Activated CD4-positive, alpha-beta T cell treated with anti-CD3 and anti-CD28 coated beads, Interleukin-2, amount 10 ng/mL, durations not matched to agents 24 days and 14 days (primary cell): ENCODE measurements at regions of chr6 and their contacts with region 1.

Region 1: DNA sequence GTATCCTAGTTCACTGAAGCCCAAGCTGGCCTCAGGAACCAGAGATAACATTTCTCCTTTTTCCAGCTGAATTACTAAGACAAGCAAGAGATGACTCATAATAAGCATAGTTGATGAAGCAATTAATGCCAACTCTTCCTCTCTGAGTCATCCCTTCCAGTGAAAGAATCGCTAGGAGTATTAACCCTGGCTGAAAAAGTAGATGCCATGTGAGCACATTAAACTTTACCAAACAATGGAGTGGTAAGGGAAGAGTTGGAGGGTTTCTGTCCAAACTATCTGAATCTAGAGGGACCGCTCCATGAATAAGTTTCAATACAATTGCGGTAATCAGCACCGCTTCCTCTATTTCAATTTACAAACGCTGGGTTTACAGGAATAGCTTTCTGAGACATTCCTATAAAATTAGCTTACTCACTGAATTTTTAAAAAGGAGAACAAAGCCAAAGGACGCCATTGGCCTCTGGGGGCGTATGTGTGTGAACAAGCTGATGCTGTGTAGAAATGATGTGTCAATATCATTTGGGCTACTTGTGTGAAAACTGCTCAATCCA is 48.3 kb downstream of the ATXN1 start:
- DNase-seq: no peak
- H3K4me3 Mint-ChIP-seq: peak overlapping the region; percentile 82
- H3K27ac Mint-ChIP-seq: peak overlapping the region; percentile 92
- H3K4me1 Mint-ChIP-seq: peaks cover 43% of the 10 kb centered on the region
- H3K27me3 Mint-ChIP-seq: no peaks in the 10 kb centered on the region

Region 2: DNA sequence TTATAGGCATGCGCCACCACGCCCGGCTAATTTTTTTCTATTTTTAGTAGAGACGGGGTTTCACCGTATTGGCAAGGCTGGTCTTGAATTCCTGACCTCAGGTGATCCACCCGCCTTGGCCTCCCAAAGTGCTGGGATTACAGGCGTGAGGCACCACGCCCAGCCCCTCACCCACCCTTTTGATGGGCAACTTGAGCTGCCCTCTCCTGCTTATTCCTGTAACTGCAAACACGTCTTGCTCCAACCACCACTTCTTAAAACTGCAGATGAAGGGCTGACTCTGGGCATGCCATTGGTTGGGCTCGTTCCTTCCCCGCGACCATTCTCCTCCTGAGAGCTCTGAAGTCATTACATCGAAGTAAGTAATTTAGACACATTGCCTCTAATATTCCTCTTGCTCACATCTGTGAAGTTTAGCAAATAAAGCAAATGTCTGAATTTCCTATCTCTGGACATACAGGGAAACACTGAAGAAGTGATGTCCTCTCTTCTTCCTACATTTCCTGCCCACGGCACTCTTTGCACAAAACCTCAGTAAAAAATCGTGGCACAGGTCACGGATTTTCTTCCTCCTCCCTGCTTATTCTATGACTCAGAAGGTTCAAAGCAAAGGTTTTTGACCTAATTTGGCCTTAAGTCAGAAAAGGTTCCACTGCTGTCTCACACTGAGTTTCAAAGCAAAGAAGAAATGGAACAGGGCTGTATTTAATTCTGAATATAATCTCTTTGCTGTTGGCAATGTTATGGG is 357.1 kb before region 1 on chr6:
- intact Hi-C with region 1: no loop called
- DNase-seq: no peak
- H3K4me3 Mint-ChIP-seq: no peak overlapping the region
- H3K27ac Mint-ChIP-seq: no peak overlapping the region
- H3K4me1 Mint-ChIP-seq: peaks cover 10% of the 10 kb centered on the region
- H3K27me3 Mint-ChIP-seq: no peaks in the 10 kb centered on the region

Region 3: DNA sequence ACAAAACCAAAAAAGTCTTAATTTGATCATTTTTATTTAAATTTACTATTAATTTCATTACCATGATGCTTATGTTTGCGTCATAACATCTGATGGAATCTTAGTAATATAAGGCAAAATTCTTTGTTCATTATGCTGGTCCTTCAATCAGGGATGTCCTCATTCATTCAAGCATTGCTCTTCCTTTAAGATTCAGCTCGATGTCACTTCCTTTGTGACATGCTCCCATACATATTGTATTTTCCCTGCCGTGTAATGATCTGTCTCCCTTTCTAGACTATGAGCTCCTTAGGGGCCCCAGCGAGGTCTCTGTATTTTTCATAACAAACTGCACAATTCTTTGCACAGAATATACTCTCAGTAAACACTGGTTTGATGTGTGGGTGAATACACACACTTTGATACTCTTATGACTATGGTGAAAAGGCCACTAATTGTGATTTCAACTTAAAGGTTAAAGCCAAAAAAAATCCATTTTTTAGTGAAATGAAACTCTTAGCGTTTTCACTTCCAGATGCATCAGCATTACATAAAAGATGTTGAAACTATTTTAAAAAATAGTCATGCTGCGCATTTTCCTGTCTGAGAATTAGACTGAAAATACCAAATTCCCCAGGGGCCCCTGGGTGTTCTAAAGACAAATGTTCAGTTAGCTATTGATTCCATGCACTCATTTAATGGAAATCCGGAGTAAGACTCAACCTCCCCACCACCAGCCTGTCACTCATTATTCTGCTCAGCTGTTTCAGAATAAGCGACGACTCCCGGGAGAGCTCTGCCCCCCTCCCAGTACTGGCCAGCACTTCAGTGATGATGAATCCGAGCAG is 121.4 kb before region 1 on chr6:
- intact Hi-C with region 1: loop called (anchors 1 kb)
- DNase-seq: no peak
- H3K4me3 Mint-ChIP-seq: peak overlapping the region; percentile 16
- H3K27ac Mint-ChIP-seq: peak overlapping the region; percentile 87
- H3K4me1 Mint-ChIP-seq: peaks cover 24% of the 10 kb centered on the region
- H3K27me3 Mint-ChIP-seq: no peaks in the 10 kb centered on the region

Region 4: DNA sequence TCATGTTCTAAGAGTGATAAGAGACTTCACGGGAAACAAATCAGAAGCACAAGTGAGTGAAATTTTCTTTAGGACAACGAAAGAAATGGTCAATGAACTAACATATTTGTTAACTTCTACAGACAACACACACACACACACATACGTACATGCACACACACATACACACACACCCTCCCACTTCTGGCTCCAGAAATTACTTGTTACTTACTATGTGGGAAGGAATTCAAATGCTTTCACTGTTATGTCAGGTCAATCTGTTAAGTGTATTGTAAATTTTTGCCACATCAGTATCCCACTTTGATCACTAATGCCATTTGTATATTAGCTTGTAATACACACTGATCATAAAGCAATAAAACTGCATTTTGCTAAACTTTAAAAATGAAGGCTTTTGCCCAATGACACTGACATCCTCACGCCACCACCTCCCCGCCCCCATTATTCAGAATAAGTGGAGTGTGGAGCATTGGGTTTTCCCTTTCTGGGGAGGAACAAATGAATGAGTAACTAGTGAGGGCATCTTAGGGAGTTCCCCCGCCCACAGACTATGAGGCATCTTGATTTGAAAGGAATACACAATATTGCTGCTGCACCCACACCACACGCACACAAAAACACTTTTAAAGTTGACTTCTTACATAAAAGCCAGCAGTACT is 28.0 kb before region 1 on chr6:
- intact Hi-C with region 1: loop called (anchors 1 kb)
- DNase-seq: peak; percentile 89
- H3K4me3 Mint-ChIP-seq: peak overlapping the region; percentile 67
- H3K27ac Mint-ChIP-seq: peak overlapping the region; percentile 92
- H3K4me1 Mint-ChIP-seq: peaks cover 82% of the 10 kb centered on the region
- H3K27me3 Mint-ChIP-seq: no peaks in the 10 kb centered on the region

Region 5: DNA sequence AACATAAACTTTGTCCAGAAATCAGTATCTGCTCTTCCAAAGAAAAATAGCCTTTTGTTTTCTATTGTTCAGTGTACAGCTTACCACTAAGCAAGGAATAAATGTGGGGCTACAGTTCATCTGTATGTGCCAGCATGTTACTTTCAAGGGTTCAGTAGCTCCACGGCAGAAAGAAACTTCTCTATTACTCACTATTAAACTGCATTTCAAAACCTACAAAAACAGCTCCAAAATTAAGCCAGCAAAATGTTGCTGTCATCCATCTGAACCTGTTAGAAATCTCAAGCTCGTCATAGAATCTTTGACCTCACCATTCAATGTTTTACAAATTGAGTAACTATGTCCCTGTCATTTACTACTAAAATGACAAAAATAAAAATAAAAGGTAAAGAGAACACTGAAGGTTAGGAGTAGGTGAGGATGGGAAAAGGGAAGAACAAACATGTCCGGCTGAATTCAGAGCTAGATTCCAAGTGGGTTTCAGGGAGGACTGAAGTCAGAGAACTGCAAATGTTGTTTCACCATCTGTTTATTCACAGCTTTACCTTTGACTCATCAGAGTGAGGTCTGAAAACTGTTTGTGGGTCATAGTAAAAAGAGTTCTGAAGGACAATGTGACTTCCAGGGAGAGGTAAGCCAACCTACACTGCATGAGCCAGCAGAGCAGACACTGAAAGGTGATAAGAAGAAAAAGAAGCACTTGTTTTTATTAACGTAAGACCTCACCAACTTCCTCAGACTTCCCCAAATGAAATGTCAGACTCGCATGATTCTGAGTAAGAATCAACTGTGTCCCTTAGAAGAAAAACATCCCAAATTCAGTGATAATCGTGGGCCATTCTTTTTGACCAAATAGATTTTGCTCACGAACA is 13.8 kb before region 1 on chr6:
- intact Hi-C with region 1: loop called (anchors 1 kb)
- DNase-seq: peak; percentile 71
- H3K4me3 Mint-ChIP-seq: peak overlapping the region; percentile 71
- H3K27ac Mint-ChIP-seq: peak overlapping the region; percentile 95
- H3K4me1 Mint-ChIP-seq: peaks cover 68% of the 10 kb centered on the region
- H3K27me3 Mint-ChIP-seq: no peaks in the 10 kb centered on the region

Region 6: DNA sequence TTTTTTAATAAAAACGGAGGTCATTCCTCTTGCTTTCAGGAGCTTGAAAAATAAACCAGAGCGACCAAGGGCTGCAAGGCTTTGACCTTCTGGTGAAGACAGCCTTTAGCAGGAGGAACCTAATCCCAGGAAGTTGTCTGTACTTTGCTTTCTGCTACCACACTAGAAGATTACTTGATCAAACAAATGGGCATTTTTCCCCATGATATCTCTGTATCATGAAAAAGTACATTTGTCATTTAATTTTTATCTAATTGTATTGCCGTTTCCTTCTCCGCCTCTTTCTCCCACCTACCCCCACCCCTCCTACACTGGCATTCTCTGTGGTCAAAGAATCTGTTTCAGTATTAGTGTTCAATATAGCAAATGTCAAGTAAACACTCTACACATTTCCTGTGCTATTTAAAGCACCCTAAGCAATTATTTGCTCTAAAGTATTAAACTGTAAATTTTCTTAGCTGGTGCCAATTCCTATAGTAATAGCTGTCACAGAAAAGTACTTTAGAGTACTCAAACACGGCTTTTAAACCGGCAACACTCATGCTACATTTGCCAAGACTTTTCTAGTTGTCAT is 18.6 kb after region 1 on chr6:
- intact Hi-C with region 1: loop called (anchors 1 kb)
- DNase-seq: peak; percentile 80
- H3K4me3 Mint-ChIP-seq: peak overlapping the region; percentile 69
- H3K27ac Mint-ChIP-seq: peak overlapping the region; percentile 76
- H3K4me1 Mint-ChIP-seq: peaks cover 62% of the 10 kb centered on the region
- H3K27me3 Mint-ChIP-seq: no peaks in the 10 kb centered on the region